ENCODE measurements at regions of chr6 and their contacts with region 1.

Region 1: GRCh38 chr6:17417817-17418216 is 24.4 kb downstream of the CAP2 start:
- DNase-seq: peak; percentile 96
- H3K4me3 ChIP-seq: peak overlapping the region; percentile 50
- CTCF ChIP-seq: no peak

Region 2: DNA sequence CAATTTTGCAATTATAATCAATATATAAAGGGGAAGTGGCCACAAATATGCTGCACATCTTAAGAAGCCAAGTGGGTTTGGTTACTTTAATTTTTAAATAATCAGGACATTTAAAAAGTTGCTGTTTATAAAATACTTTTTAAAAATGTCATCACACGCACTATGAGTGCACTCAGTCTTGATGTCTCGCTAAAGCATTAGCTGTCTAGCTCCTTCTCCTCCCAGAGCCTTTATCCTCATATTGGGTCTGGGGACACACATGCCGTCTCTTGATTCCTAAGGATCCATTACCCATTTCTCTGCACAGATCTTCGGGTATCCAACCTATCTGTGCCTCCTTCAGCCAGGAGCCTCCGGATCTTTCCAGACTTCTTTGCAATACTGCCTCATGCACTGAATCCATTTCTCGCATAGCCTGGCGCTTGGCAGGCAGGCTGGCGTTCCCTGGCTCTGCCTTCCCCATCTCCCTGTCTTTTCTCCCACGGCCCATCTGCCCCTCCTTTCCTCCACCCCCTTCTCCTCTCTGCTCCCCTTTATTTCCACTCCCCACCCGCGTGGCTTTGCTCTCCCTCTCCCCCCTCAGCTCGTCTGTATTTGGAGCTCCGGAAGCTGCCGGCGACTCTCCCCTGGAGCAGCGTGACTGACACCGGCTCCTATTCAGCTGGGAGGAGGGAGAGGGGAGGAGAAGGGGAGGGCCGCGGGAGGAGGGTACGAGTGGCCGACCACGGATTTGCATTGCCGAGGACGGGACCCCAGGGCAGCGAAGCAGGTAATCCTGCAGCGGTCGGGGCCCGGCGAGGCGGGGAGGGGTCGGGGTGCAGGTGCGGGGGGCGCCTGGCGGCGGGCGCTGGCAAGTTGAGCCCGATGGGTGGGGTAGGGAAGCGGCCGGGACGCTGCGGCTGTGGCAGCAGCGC is 24.6 kb before region 1 on chr6 and contains the start of gene CAP2:
- CTCF ChIA-PET with region 1: no interaction called
- POLR2A ChIA-PET with region 1: interaction called, 11 read pairs
- DNase-seq: no peak
- H3K4me3 ChIP-seq: peak within 1 kb of the TSS; percentile 69
- CTCF ChIP-seq: no peak

Region 3: DNA sequence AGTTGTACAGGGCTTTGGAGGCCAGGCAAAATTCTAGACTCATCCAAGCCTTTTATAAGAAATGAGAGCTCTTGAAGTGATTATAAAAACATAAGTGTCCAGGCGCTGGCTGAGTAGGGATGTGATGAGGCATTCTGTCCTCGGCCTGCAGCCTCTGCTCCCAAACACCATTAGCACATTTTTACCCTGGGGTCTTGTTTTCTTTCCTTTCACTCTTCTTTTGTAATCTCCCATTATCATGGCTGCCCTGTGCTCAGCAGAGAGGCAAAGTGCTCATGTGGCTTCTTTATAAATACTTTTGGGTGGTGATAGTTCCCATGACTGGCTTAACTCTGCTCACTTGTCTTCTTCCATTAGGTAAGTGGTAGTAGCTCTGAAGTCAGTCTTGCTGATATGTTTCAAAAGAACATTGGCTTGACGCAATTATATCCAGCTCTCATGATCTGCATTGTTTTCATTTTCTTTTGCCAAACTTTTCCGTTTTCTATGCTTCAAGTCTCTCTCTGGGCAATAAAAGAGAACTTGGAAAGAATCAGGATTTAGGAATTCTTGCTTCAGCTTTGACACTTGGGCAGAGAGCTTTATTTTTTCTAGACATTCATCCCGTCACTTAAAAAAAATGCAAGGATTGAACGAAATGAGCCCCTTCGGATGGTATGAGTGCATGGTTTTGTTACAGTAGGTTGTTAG is 36.6 kb after region 1 on chr6:
- CTCF ChIA-PET with region 1: no interaction called
- POLR2A ChIA-PET with region 1: interaction called, 15 read pairs
- DNase-seq: peak; percentile 94
- H3K4me3 ChIP-seq: peak overlapping the region; percentile 1
- CTCF ChIP-seq: no peak

Region 4: GRCh38 chr6:17851001-17851719 is 433.3 kb after region 1 on chr6:
- CTCF ChIA-PET with region 1: no interaction called
- POLR2A ChIA-PET with region 1: no interaction called
- DNase-seq: no peak
- H3K4me3 ChIP-seq: no peak overlapping the region
- CTCF ChIP-seq: no peak